MCF 10A (cell line): ENCODE measurements at regions of chr15 and their contacts with region 1.

Region 1: DNA sequence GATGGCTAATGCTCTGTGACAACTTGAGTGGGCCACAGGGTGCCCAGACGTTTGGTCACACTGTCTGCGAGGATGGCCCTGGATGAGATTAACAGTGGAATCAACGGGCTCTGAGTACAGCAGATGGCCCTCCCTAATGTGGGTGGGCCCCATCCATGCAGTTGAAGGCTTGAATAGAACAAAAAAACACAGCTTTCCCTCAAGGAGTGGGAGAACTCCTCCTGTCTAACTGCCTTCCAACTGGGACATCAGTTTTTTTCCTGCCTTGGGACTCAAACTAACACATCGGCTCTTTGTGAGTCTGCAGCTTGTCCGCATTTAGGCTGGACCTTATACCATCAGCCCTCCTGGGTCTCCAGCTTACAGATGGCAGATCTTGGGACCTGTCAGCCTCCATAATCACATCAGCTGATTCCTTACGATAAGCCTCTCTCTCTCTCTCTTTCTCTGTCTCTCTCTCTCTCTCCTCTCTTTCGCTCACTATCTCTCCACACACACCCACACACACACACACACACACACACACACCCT is 20.8 kb downstream of the FAM174B start:
- DNase-seq: no peak
- H3K4me3 Mint-ChIP-seq: no peak overlapping the region
- H3K27ac Mint-ChIP-seq: no peak overlapping the region
- H3K4me1 Mint-ChIP-seq: no peaks in the 10 kb centered on the region
- H3K27me3 Mint-ChIP-seq: no peaks in the 10 kb centered on the region
- CTCF ChIP-seq: no peak

Region 2: DNA sequence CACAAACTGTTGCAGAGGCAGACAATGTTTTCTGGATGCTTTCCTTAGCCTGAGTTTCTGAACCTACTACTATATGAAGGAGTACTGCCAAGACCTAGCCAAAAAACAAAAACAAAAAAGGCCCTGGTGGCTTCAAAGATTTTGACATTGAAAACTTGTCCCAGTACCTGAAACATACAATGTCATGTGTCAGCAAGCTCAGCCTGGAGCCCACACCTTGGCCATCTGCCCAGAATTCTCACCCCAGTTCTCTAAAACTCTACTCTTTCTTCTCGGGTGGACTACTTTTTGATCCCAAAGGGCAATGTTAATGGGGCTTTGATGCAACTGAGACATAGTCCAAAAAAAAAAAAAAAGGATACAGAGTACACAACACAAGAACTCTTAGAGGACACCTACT is 60.6 kb before region 1 on chr15:
- CTCF ChIA-PET with region 1: interaction called, 10 read pairs
- POLR2A ChIA-PET with region 1: no interaction called
- intact Hi-C with region 1: no loop called
- DNase-seq: no peak
- H3K4me3 Mint-ChIP-seq: no peak overlapping the region
- H3K27ac Mint-ChIP-seq: no peak overlapping the region
- H3K4me1 Mint-ChIP-seq: no peaks in the 10 kb centered on the region
- H3K27me3 Mint-ChIP-seq: peaks cover 78% of the 10 kb centered on the region
- CTCF ChIP-seq: no peak

Region 3: DNA sequence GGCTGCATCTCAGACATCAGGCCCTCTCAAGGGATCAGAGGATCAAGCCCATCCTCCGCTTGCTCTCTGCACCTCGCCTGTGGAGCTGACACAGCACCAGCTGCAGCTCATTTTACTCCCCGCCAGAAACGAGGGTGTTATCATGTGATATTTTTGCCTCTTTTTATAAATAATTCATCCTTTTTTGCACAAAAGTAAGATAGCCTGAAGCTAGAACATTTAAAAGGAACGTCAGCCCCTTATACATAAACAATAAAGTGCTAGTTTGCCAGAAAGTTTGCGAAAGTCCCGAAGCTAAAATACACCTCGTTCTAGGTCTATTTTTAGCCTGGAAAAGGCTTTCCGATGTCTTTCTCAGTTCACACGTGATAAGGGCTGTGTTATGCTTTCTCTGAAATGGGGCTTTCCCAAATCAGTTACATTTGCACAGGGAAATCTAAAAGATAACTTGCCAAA is 30.4 kb after region 1 on chr15:
- CTCF ChIA-PET with region 1: no interaction called
- POLR2A ChIA-PET with region 1: no interaction called
- intact Hi-C with region 1: no loop called
- DNase-seq: peak; percentile 61
- H3K4me3 Mint-ChIP-seq: no peak overlapping the region
- H3K27ac Mint-ChIP-seq: no peak overlapping the region
- H3K4me1 Mint-ChIP-seq: no peaks in the 10 kb centered on the region
- H3K27me3 Mint-ChIP-seq: peaks cover 11% of the 10 kb centered on the region
- CTCF ChIP-seq: no peak

Region 4: DNA sequence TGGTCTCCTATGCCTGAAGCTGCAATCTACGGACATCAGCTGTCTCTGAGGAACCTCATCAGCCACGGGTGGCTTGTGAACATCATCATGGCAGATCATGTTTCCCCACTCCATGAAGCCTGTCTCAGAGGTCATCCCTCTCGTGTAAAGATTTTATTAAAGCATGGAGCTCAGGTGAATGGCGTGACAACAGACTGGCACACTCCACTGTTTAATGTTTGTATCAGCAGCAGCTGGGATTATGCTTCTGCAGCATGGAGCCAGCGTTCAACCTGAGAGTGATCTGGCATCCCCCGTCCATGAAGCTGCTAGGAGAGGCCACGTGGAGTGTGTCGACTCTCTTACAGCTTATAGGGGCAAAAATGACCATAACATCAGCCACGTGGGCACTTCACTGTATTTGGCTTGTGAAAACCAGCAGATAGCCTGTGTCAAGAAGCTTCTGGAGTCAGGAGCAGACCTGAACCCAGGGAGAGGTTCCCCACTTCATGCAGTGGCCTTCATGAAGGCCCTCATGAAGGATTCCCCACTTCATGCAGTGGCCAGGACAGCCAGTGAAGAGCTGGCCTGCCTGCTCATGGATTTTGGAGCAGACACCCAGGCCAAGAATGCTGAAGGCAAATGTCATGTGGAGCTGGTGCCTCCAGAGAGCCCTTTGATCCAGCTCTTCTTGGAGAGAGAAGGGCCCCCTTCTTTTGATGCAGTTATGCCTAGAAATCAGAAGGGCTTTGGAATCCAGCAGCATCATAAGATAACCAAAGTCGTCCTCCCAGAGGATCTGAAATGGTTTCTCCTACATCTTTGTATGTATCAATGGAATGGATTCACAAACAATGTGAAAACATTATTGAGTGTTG is 161.2 kb after region 1 on chr15:
- CTCF ChIA-PET with region 1: no interaction called
- POLR2A ChIA-PET with region 1: no interaction called
- intact Hi-C with region 1: no loop called
- DNase-seq: no peak
- H3K4me3 Mint-ChIP-seq: no peak overlapping the region
- H3K27ac Mint-ChIP-seq: no peak overlapping the region
- H3K4me1 Mint-ChIP-seq: peaks cover 8% of the 10 kb centered on the region
- H3K27me3 Mint-ChIP-seq: no peaks in the 10 kb centered on the region
- CTCF ChIP-seq: no peak